ENCODE measurements at regions of chr12 and their contacts with region 1.

Region 1: DNA sequence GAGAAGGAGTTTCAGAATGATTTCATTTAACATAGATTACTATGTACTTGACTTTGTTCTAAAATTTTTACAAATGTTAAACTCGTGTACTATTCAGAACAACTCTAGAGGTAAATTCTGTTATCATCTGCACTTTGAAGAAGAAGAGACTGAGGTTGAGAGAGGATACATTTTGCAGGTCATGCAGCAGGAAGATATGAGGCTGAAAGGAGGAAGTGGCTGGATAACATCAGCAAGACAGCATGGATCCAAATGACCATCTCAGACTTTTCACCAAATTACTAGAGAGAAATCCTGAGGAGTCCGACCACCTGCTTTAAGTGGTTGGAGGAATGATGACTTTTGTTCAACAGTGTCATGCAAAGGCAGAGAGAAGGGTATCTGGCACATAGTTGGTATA is 84.9 kb downstream of the ASCL4 start:
- DNase-seq: no peak
- ATAC-seq: no peak
- H3K4me3 ChIP-seq: no peak overlapping the region
- H3K27ac ChIP-seq: no peak overlapping the region
- H3K4me1 ChIP-seq: no peaks in the 10 kb centered on the region
- H3K27me3 ChIP-seq: no peaks in the 10 kb centered on the region; the same call in 1 of the 2 replicates
- CTCF ChIP-seq: no peak
- POLR2A ChIP-seq: no peak
- RAD21 ChIP-seq: no peak

Region 2: DNA sequence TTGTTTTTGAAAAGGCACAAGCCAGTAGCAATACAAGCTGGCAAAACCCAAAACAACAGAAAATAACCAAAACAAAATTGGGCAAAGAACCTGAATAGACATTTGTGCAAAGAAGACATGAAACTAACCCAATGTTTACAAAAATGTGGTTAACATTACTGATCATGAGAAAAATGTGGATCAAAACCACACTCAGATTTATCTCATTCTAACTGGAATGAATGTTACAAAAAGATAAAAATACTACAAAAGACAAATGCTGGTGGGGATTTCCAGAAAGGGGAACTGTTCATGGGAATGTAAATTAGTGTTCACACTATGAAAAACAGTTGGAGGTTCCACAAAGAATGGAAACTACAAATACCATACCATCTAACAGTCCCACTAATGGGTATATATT is 58.2 kb before region 1 on chr12:
- CTCF ChIA-PET with region 1: no interaction called
- POLR2A ChIA-PET with region 1: no interaction called
- dilution Hi-C with region 1: no loop called
- in situ Hi-C with region 1: no loop called
- intact Hi-C with region 1: loop called (anchors 5 kb)
- DNase-seq: peak; percentile 39
- ATAC-seq: no peak
- H3K4me3 ChIP-seq: no peak overlapping the region
- H3K27ac ChIP-seq: no peak overlapping the region
- H3K4me1 ChIP-seq: no peaks in the 10 kb centered on the region
- H3K27me3 ChIP-seq: no peaks in the 10 kb centered on the region
- CTCF ChIP-seq: no peak
- POLR2A ChIP-seq: no peak
- RAD21 ChIP-seq: no peak

Region 3: GRCh38 chr12:108156717-108157116 is 297.4 kb after region 1 on chr12:
- CTCF ChIA-PET with region 1: no interaction called
- POLR2A ChIA-PET with region 1: no interaction called
- dilution Hi-C with region 1: no loop called
- in situ Hi-C with region 1: no loop called
- intact Hi-C with region 1: no loop called
- DNase-seq: no peak
- ATAC-seq: no peak
- H3K4me3 ChIP-seq: no peak overlapping the region
- H3K27ac ChIP-seq: no peak overlapping the region
- H3K4me1 ChIP-seq: no peaks in the 10 kb centered on the region
- H3K27me3 ChIP-seq: no peaks in the 10 kb centered on the region
- CTCF ChIP-seq: no peak
- POLR2A ChIP-seq: no peak
- RAD21 ChIP-seq: no peak

Region 4: DNA sequence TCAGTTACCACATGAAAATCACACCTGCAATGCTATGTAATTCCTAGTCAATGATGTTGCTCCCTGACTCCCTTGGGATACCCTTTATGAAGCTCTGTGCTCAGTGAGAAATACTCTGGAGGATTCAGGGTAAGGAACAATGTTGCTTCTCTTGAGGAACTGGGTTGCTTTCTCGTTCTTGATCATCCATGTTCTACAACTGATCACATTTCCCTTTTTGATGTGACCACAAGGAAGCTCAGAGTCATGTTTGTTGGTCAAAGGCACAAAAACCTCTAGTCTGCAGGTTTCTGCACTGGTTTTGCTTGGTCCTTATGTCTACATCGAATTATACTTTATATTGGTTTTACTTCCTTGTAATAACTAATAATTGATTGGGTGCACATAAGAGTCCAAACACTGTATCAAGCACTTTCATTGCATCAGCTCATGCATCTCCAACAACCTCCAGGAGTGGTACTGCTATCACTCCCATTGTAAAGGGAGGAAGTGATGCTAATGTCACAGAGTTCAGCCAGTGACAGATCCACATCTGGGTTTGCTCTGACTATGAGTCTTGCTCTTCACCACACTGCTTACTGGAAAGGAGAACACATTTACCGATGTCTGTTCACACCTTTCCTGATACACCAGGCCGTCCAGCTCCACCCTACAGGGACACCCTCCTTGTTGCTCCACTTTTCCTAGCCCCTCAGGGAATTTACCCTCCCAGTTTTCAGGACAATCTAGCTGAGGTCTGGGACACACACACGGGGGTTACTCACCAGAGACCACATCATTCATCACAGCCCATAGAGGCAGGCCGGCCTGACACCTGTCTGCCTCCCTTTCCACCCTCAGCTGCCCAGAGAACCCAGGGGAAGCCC is 438.8 kb after region 1 on chr12:
- CTCF ChIA-PET with region 1: no interaction called
- POLR2A ChIA-PET with region 1: no interaction called
- dilution Hi-C with region 1: no loop called
- in situ Hi-C with region 1: no loop called
- intact Hi-C with region 1: no loop called
- DNase-seq: no peak
- ATAC-seq: no peak
- H3K4me3 ChIP-seq: no peak overlapping the region
- H3K27ac ChIP-seq: no peak overlapping the region
- H3K4me1 ChIP-seq: no peaks in the 10 kb centered on the region
- H3K27me3 ChIP-seq: no peaks in the 10 kb centered on the region
- CTCF ChIP-seq: no peak
- POLR2A ChIP-seq: no peak
- RAD21 ChIP-seq: no peak

Measured in IMR-90 (cell line).